Endothelial cell of umbilical vein (primary cell): ENCODE measurements at regions of chr9 and their contacts with region 1.

Region 1: DNA sequence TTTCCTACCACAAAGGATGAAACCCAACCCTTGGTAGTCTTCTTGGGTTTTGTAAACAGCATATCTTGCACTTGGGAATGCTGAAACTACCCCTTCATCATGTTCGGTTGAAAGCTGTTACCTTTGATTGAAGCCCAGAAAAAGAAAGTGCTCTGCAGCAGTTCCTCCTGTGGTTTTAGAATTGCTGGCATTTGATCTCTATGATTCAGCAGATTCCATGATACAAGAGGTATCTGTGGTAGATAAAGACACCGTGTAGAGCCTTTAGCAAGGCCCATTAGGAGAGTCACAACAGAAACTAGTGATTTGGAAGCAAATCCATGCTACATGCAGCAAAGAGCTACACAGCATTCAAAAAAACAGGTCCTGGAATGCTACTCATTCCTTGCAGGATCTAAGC is 557.0 kb downstream of the TLE1 start:
- DNase-seq: no peak
- H3K4me3 ChIP-seq: no peak overlapping the region
- H3K27ac ChIP-seq: no peak overlapping the region
- H3K4me1 ChIP-seq: no peaks in the 10 kb centered on the region
- H3K27me3 ChIP-seq: no peaks in the 10 kb centered on the region
- CTCF ChIP-seq: no peak
- POLR2A ChIP-seq: no peak

Region 2: DNA sequence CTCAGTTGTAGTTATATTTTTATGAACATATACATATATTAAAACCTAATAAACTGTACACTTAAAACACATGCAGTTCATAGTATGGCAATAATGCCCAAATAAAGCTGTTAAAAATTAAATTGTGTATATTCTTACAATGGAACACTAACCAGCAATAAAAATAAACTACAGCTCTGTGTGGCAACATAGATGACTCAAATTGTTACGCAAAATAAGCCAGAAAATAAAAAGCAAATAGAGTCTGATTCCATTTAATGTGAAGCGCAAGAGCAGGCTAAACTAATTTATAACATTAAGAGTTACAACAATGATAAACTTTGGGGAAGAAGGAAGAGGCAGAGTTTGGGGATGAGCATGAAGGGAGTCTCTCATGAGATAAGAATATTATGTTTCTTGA is 40.3 kb before region 1 on chr9:
- CTCF ChIA-PET with region 1: no interaction called
- POLR2A ChIA-PET with region 1: no interaction called
- dilution Hi-C with region 1: no loop called
- intact Hi-C with region 1: no loop called
- DNase-seq: no peak
- H3K4me3 ChIP-seq: no peak overlapping the region
- H3K27ac ChIP-seq: no peak overlapping the region
- H3K4me1 ChIP-seq: no peaks in the 10 kb centered on the region
- H3K27me3 ChIP-seq: no peaks in the 10 kb centered on the region
- CTCF ChIP-seq: no peak
- POLR2A ChIP-seq: no peak

Region 3: DNA sequence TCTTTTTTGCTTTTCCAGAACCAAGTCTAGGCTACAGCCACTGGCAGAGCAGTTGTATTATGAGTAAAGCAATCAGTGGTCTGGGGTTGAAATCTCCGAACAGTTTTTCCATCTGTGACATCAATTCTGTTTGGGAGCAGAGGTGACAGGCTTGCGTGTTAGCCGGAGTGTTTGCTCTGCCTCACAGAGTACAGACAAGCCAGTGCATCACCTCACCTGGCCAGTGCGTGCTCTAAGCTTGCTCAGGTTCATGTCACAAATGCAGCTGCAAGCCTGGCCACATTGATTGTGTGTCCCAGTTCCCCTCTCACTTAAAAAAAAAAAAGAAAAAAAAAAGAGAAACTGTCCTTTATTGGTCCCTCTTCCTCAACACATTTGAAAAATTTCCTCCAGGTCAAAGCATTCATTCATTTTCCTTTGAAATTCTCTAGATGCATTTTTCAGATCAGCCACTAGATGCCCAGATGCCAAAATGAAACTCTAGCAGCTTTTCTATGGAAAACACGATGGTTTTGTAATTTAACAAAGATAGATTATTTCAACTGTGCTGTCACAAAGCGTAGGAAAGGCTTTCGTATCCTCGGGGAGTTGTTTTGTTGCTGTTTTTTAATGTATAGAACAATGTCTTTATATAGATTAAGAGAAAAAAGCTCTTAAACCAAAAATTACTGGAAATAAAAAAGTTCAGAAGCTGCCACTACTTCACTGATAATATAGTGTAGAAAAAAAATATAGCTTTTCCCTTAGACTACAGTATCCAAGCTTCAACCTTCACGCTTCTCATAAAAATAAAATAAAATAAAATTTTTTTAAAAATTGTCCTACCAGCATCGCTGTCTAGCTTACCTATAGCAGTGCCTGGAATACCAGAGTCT is 28.5 kb before region 1 on chr9:
- CTCF ChIA-PET with region 1: no interaction called
- POLR2A ChIA-PET with region 1: no interaction called
- dilution Hi-C with region 1: no loop called
- intact Hi-C with region 1: loop called (anchors 1 kb)
- DNase-seq: no peak
- H3K4me3 ChIP-seq: no peak overlapping the region
- H3K27ac ChIP-seq: no peak overlapping the region
- H3K4me1 ChIP-seq: no peaks in the 10 kb centered on the region
- H3K27me3 ChIP-seq: no peaks in the 10 kb centered on the region
- CTCF ChIP-seq: peak in 1 of 2 donors; percentile 10
- POLR2A ChIP-seq: no peak

Region 4: DNA sequence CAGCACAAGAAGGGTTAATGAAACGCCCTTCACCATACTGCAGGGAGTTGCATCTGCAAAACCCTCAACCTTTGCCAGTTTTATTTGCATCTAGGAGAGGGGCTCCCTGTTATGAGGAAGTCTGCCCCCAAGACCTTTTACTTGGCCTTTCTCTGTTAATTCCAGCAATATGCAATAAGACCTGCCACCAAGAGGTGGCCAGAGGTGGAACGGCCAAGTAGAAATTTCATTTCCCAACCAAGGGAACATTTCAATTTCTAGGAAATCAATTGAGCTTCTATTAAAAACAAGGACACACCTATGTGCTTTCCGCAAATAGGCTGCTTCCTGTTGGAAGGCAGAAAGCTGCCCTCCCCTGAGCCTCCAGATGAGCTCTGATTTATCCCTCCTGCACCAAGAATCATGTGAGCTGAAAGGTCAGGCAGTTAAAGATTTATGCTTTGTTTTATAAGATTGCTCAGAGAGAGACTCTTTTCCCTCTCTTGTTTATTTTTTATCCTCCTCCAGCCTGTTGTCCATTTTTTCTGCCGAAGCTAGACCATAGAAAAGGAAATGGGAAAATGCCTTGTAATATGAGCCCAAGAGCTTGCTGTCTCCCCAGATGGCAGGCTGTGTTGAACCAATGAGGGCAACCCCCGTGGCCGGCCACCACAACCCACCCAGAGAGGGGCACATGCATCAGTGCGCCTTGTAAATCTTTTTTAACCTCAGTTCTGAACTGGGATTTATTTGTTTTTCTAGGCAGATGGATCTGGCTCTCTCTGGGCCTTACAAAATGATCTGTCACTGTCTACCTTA is 15.8 kb before region 1 on chr9:
- CTCF ChIA-PET with region 1: no interaction called
- POLR2A ChIA-PET with region 1: no interaction called
- dilution Hi-C with region 1: no loop called
- intact Hi-C with region 1: no loop called
- DNase-seq: no peak
- H3K4me3 ChIP-seq: no peak overlapping the region
- H3K27ac ChIP-seq: no peak overlapping the region
- H3K4me1 ChIP-seq: no peaks in the 10 kb centered on the region
- H3K27me3 ChIP-seq: no peaks in the 10 kb centered on the region
- CTCF ChIP-seq: no peak
- POLR2A ChIP-seq: no peak